ENCODE measurements at regions of chr6 and their contacts with region 1.

Region 1: GRCh38 chr6:83057705-83058321 is 7.8 kb downstream of the UBE3D start:
- DNase-seq: peak; percentile 67
- ATAC-seq: peak; percentile 68
- H3K4me3 ChIP-seq: no peak overlapping the region
- H3K27ac ChIP-seq: no peak overlapping the region
- H3K4me1 ChIP-seq: no peaks in the 10 kb centered on the region
- H3K27me3 ChIP-seq: no peaks in the 10 kb centered on the region
- CTCF ChIP-seq: peak; percentile 85

Region 2: GRCh38 chr6:82247634-82248232 is 810.1 kb before region 1 on chr6 and contains the start of gene IBTK:
- CTCF ChIA-PET with region 1: no interaction called
- POLR2A ChIA-PET with region 1: no interaction called
- intact Hi-C with region 1: loop called (anchors 1 kb)
- DNase-seq: peak; percentile 88
- ATAC-seq: peak; percentile 70
- H3K4me3 ChIP-seq: peak within 1 kb of the TSS; percentile 84
- H3K27ac ChIP-seq: peak within 1 kb of the TSS; percentile 100
- H3K4me1 ChIP-seq: peaks cover 38% of the 10 kb centered on the region
- H3K27me3 ChIP-seq: no peaks in the 10 kb centered on the region
- CTCF ChIP-seq: no peak
- total RNA-seq, gene IBTK: 17.2 and 20.0 TPM in 2 replicates

Region 3: DNA sequence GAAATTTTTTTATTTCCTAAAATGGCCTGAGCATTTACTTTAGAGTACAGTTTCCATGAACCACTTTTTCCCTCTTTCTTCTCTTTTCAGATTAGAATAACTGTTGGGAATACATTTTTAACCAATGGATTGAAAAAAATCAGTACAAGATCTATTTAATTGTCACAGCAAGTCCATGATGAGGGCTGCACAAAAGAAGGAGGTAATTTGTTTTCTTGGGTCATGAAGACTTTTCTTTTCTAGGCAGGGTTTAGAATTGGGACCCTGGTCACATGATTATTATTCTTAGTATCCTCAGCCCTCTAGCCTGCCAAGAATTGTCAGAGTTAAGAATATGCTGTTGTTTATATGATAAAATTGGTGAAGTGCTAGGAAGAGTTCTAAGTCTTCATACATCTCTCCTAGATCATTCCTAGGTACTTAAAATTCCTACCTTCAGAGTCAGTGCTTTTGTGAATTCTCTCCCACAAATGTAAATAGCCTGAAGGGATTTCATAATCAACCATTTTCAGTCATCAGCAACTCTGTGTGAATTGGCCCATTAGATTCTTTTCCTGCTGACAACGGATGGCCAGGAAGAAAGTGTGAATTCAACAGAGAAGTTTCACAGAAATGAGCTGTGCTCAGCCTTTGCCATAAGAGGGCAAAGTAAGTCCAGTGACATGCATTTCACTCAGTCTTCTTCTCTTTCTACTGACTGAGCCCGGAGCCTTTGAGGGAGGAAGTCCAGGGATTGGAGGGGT is 726.6 kb before region 1 on chr6:
- CTCF ChIA-PET with region 1: no interaction called
- POLR2A ChIA-PET with region 1: no interaction called
- intact Hi-C with region 1: loop called (anchors 1 kb)
- DNase-seq: peak; percentile 79
- ATAC-seq: peak; percentile 90
- H3K4me3 ChIP-seq: no peak overlapping the region
- H3K27ac ChIP-seq: no peak overlapping the region
- H3K4me1 ChIP-seq: peaks cover 14% of the 10 kb centered on the region
- H3K27me3 ChIP-seq: no peaks in the 10 kb centered on the region
- CTCF ChIP-seq: peak; percentile 55

Region 4: DNA sequence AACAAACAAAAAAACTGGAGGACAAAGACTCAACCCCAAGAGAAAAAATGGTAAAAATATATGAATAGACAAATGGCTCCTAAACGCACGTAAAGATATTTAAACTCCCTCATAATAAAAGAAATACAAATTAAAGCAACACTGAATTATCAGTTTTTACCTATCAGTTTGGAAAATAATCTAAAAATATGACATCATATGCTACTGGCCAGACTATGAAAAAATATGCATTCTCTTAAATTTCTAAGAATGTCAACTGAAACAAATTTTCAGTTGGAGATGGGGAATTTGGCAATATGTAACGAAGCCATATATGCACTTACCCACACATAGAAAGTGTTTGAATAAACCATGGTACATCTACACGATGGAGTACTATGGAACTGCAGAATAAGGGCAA is 516.5 kb before region 1 on chr6:
- CTCF ChIA-PET with region 1: no interaction called
- POLR2A ChIA-PET with region 1: no interaction called
- intact Hi-C with region 1: loop called (anchors 5 kb)
- DNase-seq: no peak
- ATAC-seq: no peak
- H3K4me3 ChIP-seq: no peak overlapping the region
- H3K27ac ChIP-seq: no peak overlapping the region
- H3K4me1 ChIP-seq: 0 out of 2 replicates have a peak, but pooled peaks cover 5% of the 10 kb centered on the region
- H3K27me3 ChIP-seq: no peaks in the 10 kb centered on the region
- CTCF ChIP-seq: no peak

Region 5: GRCh38 chr6:82712852-82713251 is 345.0 kb before region 1 on chr6:
- CTCF ChIA-PET with region 1: no interaction called
- POLR2A ChIA-PET with region 1: no interaction called
- intact Hi-C with region 1: loop called (anchors 5 kb)
- DNase-seq: peak; percentile 23
- ATAC-seq: no peak
- H3K4me3 ChIP-seq: no peak overlapping the region
- H3K27ac ChIP-seq: no peak overlapping the region
- H3K4me1 ChIP-seq: no peaks in the 10 kb centered on the region
- H3K27me3 ChIP-seq: no peaks in the 10 kb centered on the region
- CTCF ChIP-seq: peak; percentile 65

Region 6: GRCh38 chr6:83270971-83271719 is 213.3 kb after region 1 on chr6:
- CTCF ChIA-PET with region 1: no interaction called
- POLR2A ChIA-PET with region 1: no interaction called
- intact Hi-C with region 1: no loop called
- DNase-seq: peak; percentile 76
- ATAC-seq: peak; percentile 60
- H3K4me3 ChIP-seq: no peak overlapping the region
- H3K27ac ChIP-seq: 0 out of 2 replicates have a peak overlapping the region, but pooled peaks have one; percentile 6
- H3K4me1 ChIP-seq: peaks cover 16% of the 10 kb centered on the region; the same call in 1 of the 2 replicates
- H3K27me3 ChIP-seq: no peaks in the 10 kb centered on the region
- CTCF ChIP-seq: no peak

Region 7: DNA sequence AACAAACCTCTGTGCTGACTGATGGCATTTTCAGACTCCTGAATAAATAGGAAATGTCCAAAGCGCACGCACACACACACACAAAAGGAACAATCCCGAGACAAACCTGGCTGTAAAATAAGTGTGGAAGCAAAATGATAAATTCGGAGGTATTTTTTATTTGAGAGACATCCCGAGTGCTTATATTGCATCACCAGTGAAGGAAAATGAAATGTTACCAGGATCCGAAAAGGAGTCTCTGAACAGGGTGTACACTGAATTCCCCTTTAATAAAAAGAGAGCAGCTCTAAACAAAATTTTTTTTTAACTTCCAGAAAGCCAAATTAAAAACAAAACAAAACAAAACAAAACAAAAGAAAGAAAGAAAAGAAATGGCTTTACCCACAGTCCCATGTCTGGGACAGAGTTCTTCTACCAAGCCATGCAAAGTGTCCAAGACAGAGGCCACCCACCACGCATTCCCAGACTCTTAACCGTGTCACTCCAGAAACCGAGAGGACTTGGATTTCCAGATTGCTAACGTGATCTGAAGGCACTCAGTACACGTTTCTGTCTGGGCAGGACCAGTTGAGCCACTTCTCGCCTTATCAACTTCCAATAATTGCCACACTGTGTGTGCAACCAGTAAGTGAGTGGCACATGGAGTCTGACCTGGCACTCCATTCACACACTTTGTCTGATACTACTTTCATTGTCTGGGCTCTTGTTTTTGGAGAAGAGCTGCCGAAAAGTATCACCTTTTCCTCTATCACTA is 372.2 kb after region 1 on chr6:
- CTCF ChIA-PET with region 1: no interaction called
- POLR2A ChIA-PET with region 1: no interaction called
- intact Hi-C with region 1: no loop called
- DNase-seq: peak; percentile 59
- ATAC-seq: peak; percentile 29
- H3K4me3 ChIP-seq: peak overlapping the region; percentile 92
- H3K27ac ChIP-seq: peak overlapping the region; percentile 89
- H3K4me1 ChIP-seq: peaks cover 58% of the 10 kb centered on the region
- H3K27me3 ChIP-seq: no peaks in the 10 kb centered on the region
- CTCF ChIP-seq: no peak